Ascending aorta (tissue), 2 donors: ENCODE measurements at regions of chr2 and their contacts with region 1.

Region 1: GRCh38 chr2:233443468-233444183 is 89.3 kb downstream of the DGKD start:
- DNase-seq: peak in 1 of 2 donors; percentile 86
- H3K4me3 ChIP-seq: no peak overlapping the region
- H3K27ac ChIP-seq: no peak overlapping the region
- H3K4me1 ChIP-seq: no peaks in the 10 kb centered on the region
- H3K27me3 ChIP-seq: no peaks in the 10 kb centered on the region
- CTCF ChIP-seq: peak; percentile 75 to 83 (median 81)

Region 2: DNA sequence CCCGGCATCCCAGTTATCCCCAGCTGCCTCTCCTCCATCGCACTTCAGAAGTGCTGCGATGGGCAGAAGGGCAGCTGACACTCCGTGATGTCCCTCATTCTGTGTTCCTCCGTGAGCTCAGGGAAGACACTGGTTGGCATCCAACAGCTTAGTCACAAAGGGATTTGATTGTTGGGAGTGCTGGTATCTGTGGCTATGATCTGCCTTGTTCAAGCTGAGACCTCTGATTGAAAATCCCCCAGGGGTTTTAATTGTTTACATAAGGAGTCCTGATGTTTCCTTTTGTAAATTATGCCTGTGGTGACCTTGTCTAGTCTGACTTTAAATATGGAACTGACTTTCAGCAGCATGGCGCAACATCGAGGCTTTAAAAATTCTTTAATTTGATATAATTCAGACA is 154.9 kb before region 1 on chr2:
- intact Hi-C with region 1: loop called (anchors 10 kb)
- DNase-seq: no peak
- H3K4me3 ChIP-seq: no peak overlapping the region
- H3K27ac ChIP-seq: no peak overlapping the region
- H3K4me1 ChIP-seq: no peaks in the 10 kb centered on the region
- H3K27me3 ChIP-seq: no peaks in the 10 kb centered on the region
- CTCF ChIP-seq: no peak

Region 3: DNA sequence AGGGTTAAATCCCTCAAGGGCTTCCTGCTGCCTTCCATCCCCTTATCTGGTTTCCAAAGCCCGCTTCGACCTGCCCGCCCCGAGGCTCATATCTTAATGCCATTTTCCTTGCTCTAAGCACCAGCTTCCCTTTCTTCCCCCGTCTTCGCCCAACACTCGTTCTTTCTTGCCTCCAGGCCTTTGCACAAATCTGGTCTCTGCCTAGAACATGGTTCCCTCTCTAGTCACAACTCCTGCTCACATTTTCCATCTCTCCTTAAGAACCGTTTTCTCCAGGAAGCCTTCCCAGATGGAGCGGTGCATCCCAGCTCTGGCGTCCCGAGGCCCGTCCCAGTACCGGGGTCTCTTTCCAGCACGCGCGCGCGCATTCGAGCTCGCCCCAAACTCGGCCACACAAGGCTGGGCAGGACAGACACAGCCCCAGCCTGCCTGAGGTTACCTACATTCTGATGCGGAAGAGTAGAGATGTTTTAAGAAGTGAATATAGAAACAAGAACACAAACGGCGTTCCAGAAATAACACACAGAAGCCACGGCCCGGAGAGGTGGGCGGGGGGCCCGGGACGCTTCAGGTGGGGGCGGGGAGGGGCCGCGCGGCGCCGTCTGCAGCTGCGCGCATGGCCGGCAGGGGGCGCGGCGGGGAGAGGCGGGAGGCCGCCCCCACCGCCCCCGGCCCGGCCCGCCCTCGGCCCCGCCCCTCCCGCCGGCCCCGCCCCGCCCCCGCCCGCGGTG is 89.7 kb before region 1 on chr2 and contains the start of gene DGKD:
- intact Hi-C with region 1: loop called (anchors 1 kb)
- DNase-seq: peak in 1 of 2 donors; percentile 68
- H3K4me3 ChIP-seq: peak within 1 kb of the TSS; percentile 77 to 78
- H3K27ac ChIP-seq: peak within 1 kb of the TSS in 1 of 2 donors; percentile 46
- H3K4me1 ChIP-seq: peaks cover 0 to 10% of the 10 kb centered on the region in 2 donors
- H3K27me3 ChIP-seq: no peaks in the 10 kb centered on the region
- CTCF ChIP-seq: peak in 2 of 3 experiments; percentile 33 to 51
- total RNA-seq, gene DGKD: 28.3 TPM

Region 4: DNA sequence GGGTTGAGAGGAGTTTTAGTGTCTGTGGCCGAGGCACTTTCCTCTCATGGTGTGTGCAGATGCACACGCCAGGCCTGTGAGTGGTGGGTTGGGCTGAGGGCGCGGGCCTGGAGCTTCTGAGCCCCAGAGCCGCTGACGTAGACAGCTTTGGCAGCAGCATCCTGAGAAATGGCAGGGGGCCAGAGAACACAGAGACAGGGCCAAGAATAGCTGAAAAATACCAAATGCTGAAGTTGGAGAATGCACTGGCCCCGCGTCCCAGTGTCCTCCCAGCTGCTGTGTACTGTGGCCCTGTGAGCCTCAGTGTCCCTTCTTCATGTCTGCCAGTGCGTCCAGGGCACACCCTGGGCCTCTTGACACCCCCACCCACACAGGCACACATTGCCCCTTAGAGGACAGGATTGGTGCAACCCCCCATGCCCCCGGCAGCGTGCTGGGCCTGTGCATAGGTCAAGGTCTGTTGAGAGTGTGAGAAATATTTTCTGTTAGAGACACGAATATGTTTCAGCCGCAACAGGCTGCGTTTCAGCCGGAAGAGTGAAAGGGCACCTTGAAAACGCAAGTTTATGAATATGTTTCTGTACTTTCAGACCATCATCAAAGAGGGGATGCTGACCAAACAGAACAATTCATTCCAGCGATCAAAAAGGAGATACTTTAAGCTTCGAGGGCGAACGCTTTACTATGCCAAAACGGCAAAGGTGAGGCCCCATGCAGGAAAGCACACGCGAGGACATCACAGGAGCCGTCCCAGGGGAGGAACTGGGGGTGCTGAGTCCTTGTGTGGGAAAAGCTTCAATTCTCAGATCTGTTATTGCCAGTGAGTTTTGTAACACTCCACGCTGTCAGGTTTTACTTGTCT is 55.7 kb before region 1 on chr2:
- intact Hi-C with region 1: loop called (anchors 5 kb)
- DNase-seq: peak; percentile 53 to 96
- H3K4me3 ChIP-seq: peak overlapping the region; percentile 18 to 54
- H3K27ac ChIP-seq: peak overlapping the region; percentile 78 to 84
- H3K4me1 ChIP-seq: peaks cover 11 to 25% of the 10 kb centered on the region in 2 donors
- H3K27me3 ChIP-seq: no peaks in the 10 kb centered on the region
- CTCF ChIP-seq: no peak

Region 5: GRCh38 chr2:233404222-233404621 is 39.4 kb before region 1 on chr2:
- intact Hi-C with region 1: loop called (anchors 1 kb)
- DNase-seq: peak in 1 of 2 donors; percentile 63
- H3K4me3 ChIP-seq: no peak overlapping the region
- H3K27ac ChIP-seq: no peak overlapping the region
- H3K4me1 ChIP-seq: peaks cover 8 to 12% of the 10 kb centered on the region in 2 donors
- H3K27me3 ChIP-seq: no peaks in the 10 kb centered on the region
- CTCF ChIP-seq: peak in 2 of 3 experiments; percentile 63 to 68

Region 6: GRCh38 chr2:233486778-233487552 is 43.3 kb after region 1 on chr2:
- intact Hi-C with region 1: loop called (anchors 5 kb)
- DNase-seq: no peak
- H3K4me3 ChIP-seq: no peak overlapping the region
- H3K27ac ChIP-seq: peak overlapping the region; percentile 82 to 86
- H3K4me1 ChIP-seq: peaks cover 7 to 43% of the 10 kb centered on the region in 2 donors
- H3K27me3 ChIP-seq: no peaks in the 10 kb centered on the region
- CTCF ChIP-seq: no peak